ENCODE measurements at regions of chr10 and their contacts with region 1.

Region 1: GRCh38 chr10:99845837-99846382 is 63.5 kb downstream of the ABCC2 start:
- DNase-seq: peak; percentile 75
- H3K4me3 Mint-ChIP-seq: no peak overlapping the region
- H3K27ac Mint-ChIP-seq: no peak overlapping the region
- H3K4me1 Mint-ChIP-seq: peaks cover 4% of the 10 kb centered on the region
- H3K27me3 Mint-ChIP-seq: no peaks in the 10 kb centered on the region

Region 2: DNA sequence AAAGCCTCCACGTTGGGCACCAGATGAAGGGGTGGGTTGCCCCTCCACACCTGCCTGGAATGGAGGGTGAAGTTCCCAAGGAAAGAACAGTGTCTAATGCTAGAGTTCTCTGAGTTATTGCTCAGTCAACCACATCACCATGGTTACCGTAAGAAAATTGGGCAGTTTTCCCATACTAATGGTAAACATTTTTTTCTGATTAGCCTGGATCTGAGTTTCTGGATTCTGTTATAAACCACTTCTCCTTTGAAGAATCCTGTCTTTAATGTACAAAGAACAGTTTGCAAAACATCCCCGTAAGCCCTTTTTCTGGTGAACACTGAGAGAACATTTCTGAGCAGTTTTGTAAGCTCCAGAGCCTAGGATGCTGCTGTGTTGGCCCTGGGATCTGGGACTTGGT is 18.0 kb before region 1 on chr10:
- CTCF ChIA-PET with region 1: interaction called, 12 read pairs
- POLR2A ChIA-PET with region 1: no interaction called
- intact Hi-C with region 1: no loop called
- DNase-seq: no peak
- H3K4me3 Mint-ChIP-seq: no peak overlapping the region
- H3K27ac Mint-ChIP-seq: no peak overlapping the region
- H3K4me1 Mint-ChIP-seq: peaks cover 11% of the 10 kb centered on the region
- H3K27me3 Mint-ChIP-seq: no peaks in the 10 kb centered on the region

Region 3: DNA sequence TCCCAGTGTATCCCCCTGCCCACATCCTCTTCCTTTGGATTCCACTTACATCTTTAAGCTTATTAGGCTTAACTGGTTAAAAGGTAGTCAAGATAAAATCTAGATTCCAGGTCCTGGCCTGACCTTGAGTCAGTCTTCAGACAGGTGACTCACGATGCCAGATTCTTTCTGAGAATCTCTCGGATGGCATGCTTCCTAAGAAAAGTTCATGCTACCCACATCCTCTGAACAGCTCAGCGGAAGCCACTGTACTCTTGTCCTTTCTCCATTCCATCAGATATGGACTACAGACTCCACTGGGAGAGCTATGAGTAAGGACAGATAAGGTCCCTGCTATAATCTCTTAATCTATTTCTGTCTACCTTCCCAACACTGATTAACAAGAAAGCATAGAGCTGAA is 120.4 kb after region 1 on chr10:
- CTCF ChIA-PET with region 1: interaction called, 23 read pairs
- POLR2A ChIA-PET with region 1: no interaction called
- intact Hi-C with region 1: no loop called
- DNase-seq: no peak
- H3K4me3 Mint-ChIP-seq: no peak overlapping the region
- H3K27ac Mint-ChIP-seq: no peak overlapping the region
- H3K4me1 Mint-ChIP-seq: peaks cover 4% of the 10 kb centered on the region
- H3K27me3 Mint-ChIP-seq: no peaks in the 10 kb centered on the region

Region 4: DNA sequence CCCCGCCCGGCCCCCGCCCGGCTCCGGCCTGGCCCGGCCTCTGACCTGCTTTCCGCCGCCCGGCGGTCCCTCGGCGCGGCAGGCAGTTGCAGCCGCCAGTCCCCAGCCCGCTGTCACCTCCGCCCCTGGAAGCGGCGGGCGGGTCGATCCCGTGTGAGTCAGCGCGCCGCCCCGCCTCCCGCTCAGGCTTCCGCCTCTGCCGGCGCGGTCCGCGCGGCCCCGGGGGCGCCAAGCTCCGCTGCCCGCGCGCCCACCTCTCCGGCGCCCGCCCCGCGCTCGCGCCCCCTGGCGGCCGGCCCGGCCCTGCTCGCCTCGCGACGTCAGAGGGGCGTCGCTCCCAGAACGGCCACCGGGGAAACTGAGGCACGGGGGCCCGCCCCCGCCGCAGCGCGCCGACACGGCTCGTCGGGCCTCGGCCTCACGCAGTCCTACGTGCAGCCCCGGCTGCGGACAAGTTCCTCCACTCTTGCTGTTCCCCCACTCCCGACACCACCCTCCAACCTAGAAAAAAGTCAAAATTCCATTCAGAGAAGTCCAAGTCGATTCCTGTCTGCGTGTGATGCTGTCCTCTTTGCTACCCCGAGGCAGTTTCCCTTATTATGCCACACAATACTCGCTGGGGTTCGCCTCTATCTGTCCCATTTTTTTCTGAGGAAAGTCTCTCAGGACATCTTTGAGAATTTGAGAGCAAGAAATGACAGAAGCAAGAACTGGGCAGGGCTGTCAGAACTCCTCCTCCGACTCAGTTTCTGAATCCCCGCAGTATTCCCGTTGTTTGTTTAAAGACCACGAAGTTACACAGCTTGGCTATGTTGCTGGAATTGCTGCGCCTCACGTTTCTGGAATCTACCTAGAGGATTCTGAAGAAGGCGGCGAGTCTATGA is 164.1 kb after region 1 on chr10 and contains the start of gene DNMBP:
- CTCF ChIA-PET with region 1: interaction called, 119 read pairs
- POLR2A ChIA-PET with region 1: no interaction called
- intact Hi-C with region 1: loop called (anchors 5 kb)
- DNase-seq: peak; percentile 86
- H3K4me3 Mint-ChIP-seq: peak within 1 kb of the TSS; percentile 86
- H3K27ac Mint-ChIP-seq: no peak within 1 kb of the TSS
- H3K4me1 Mint-ChIP-seq: peaks cover 46% of the 10 kb centered on the region
- H3K27me3 Mint-ChIP-seq: peaks cover 10% of the 10 kb centered on the region
- total RNA-seq, gene DNMBP: 2.1 to 2.2 TPM

Region 5: GRCh38 chr10:100046021-100046486 is 200.1 kb after region 1 on chr10:
- CTCF ChIA-PET with region 1: interaction called, 282 read pairs
- POLR2A ChIA-PET with region 1: interaction called, 3 read pairs
- intact Hi-C with region 1: loop called (anchors 1 kb)
- DNase-seq: peak; percentile 87
- H3K4me3 Mint-ChIP-seq: no peak overlapping the region
- H3K27ac Mint-ChIP-seq: no peak overlapping the region
- H3K4me1 Mint-ChIP-seq: peaks cover 3% of the 10 kb centered on the region
- H3K27me3 Mint-ChIP-seq: no peaks in the 10 kb centered on the region

Region 6: DNA sequence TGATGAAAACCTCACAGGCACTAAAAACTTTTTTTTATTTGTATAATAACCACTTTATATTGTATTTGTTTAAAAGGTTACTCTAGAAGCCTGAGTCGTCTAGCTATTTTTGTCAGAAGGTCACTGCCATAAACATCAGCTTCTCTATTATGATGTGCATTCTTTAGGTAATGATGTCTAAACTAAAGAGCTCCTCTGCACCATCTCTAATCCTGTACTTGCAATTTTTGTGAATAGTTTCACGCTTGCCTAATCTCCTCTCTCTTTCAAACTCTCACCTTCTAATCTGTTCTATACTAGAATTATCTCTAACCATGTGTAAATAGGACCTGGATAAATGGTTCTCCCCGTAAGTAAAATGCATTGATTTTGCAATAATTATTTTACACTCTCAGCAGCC is 393.9 kb after region 1 on chr10:
- CTCF ChIA-PET with region 1: interaction called, 4 read pairs
- POLR2A ChIA-PET with region 1: no interaction called
- intact Hi-C with region 1: loop called (anchors 5 kb)
- DNase-seq: no peak
- H3K4me3 Mint-ChIP-seq: no peak overlapping the region
- H3K27ac Mint-ChIP-seq: no peak overlapping the region
- H3K4me1 Mint-ChIP-seq: peaks cover 13% of the 10 kb centered on the region
- H3K27me3 Mint-ChIP-seq: no peaks in the 10 kb centered on the region

Measured in activated CD4-positive, alpha-beta memory T cell treated with anti-CD3 and anti-CD28 coated beads for 36 hours (primary cell).